PC-9 (cell line): ENCODE measurements at regions of chr5 and their contacts with region 1.

Region 1: GRCh38 chr5:69105996-69106906 is 12.4 kb downstream of the SLC30A5 start:
- DNase-seq: no peak
- H3K4me3 ChIP-seq: no peak overlapping the region
- H3K27ac ChIP-seq: no peak overlapping the region
- H3K4me1 ChIP-seq: no peaks in the 10 kb centered on the region
- H3K27me3 ChIP-seq: no peaks in the 10 kb centered on the region
- CTCF ChIP-seq: no peak

Region 2: GRCh38 chr5:68673106-68673822 is 433.0 kb before region 1 on chr5:
- CTCF ChIA-PET with region 1: no interaction called
- POLR2A ChIA-PET with region 1: no interaction called
- intact Hi-C with region 1: no loop called
- DNase-seq: no peak
- H3K4me3 ChIP-seq: no peak overlapping the region
- H3K27ac ChIP-seq: no peak overlapping the region
- H3K4me1 ChIP-seq: no peaks in the 10 kb centered on the region
- H3K27me3 ChIP-seq: no peaks in the 10 kb centered on the region
- CTCF ChIP-seq: no peak

Region 3: DNA sequence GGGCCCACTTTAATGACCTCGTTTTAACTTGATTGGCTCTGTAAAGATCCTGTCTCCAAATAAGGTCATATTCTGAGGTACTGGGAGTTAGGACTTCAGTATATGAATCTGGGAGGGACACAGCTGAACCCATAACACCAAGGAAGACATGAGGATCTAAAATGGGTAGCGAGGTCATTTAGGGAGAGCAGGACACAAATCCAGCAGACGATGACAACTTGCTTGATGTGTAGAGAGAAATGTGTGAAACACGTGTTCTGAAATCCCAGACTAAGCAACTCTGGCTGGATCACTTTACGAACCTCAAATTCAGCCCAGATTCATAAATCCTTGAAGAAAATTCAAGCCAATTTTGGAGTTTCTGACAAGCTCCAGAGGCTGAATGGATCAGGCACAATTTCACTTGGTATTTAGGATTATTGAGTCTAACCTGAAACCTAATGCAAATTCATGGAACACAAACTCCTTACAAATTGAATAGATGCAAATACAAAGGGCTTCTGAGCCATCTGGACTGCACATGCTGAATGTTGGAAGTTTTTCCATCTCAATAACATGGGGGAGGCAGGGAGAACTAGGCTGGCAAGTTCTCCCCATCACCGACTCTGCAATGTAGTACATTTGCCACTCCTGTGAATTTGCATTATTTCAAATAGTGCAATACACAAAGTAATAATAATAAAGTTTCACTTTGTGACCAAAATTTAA is 86.4 kb before region 1 on chr5:
- CTCF ChIA-PET with region 1: no interaction called
- POLR2A ChIA-PET with region 1: no interaction called
- intact Hi-C with region 1: no loop called
- DNase-seq: no peak
- H3K4me3 ChIP-seq: no peak overlapping the region
- H3K27ac ChIP-seq: no peak overlapping the region
- H3K4me1 ChIP-seq: no peaks in the 10 kb centered on the region
- H3K27me3 ChIP-seq: peaks cover 7% of the 10 kb centered on the region; the same call in 1 of the 2 replicates
- CTCF ChIP-seq: no peak

Region 4: DNA sequence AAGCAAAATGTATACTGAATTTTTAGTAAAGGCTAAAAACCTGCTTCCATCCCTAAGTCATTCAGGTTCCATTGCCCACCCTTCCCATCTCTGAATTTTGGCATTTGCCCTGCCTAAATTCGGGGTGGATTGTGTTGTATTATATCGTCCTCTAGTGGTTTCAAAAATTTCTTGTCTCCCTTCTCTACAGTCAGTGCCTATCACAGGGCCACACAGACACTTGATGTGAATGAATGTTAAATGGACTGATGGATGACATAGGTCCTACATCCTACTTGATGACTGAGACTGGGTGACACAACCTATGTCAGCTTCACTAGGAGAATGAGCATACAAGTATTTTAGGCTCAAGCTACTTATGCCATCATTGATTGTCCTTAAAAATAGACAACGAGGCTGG is 58.0 kb before region 1 on chr5:
- CTCF ChIA-PET with region 1: no interaction called
- POLR2A ChIA-PET with region 1: no interaction called
- intact Hi-C with region 1: no loop called
- DNase-seq: no peak
- H3K4me3 ChIP-seq: no peak overlapping the region
- H3K27ac ChIP-seq: no peak overlapping the region
- H3K4me1 ChIP-seq: peaks cover 32% of the 10 kb centered on the region
- H3K27me3 ChIP-seq: no peaks in the 10 kb centered on the region
- CTCF ChIP-seq: peak; percentile 35; the same call in 1 of the 2 replicates

Region 5: DNA sequence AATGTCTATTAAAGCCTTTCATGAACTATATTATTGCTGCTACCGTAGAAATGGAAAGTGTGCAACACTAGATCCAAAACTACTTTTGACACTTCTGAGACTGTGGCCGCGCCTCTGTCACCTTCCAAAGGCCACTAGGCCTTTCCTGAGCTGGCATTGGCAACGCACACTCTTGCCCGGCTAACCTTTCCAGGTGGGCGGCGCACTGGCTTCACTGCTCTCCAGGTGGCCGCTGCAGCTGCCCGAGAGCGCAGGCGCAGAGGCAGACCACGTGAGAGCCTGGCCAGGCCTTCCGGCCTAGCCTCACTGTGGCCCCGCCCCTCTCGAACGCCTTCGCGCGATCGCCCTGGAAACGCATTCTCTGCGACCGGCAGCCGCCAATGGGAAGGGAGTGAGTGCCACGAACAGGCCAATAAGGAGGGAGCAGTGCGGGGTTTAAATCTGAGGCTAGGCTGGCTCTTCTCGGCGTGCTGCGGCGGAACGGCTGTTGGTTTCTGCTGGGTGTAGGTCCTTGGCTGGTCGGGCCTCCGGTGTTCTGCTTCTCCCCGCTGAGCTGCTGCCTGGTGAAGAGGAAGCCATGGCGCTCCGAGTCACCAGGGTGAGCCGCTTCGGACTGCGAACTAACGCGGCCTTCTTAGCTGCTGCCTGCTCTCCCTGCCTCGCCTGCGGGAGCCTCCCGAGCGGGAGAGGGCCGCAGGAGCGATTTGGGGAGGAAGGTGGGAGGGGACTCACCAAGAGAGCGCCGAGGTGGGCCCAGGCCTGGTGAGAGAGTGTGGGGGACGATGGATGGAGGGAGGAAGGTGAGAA is 60.6 kb after region 1 on chr5 and contains the start of gene CCNB1:
- CTCF ChIA-PET with region 1: no interaction called
- POLR2A ChIA-PET with region 1: no interaction called
- intact Hi-C with region 1: no loop called
- DNase-seq: peak; percentile 94 to 98
- H3K4me3 ChIP-seq: peak within 1 kb of the TSS; percentile 92
- H3K27ac ChIP-seq: peak within 1 kb of the TSS; percentile 53
- H3K4me1 ChIP-seq: peaks cover 27% of the 10 kb centered on the region
- H3K27me3 ChIP-seq: no peaks in the 10 kb centered on the region
- CTCF ChIP-seq: no peak
- total RNA-seq, gene CCNB1: 174 and 248 TPM in 2 replicates

Region 6: GRCh38 chr5:69217548-69218526 is 111.6 kb after region 1 on chr5:
- CTCF ChIA-PET with region 1: no interaction called
- POLR2A ChIA-PET with region 1: interaction called, 11 read pairs
- intact Hi-C with region 1: no loop called
- DNase-seq: peak; percentile 78 to 92
- H3K4me3 ChIP-seq: peak overlapping the region; percentile 89
- H3K27ac ChIP-seq: peak overlapping the region; percentile 50
- H3K4me1 ChIP-seq: peaks cover 16% of the 10 kb centered on the region
- H3K27me3 ChIP-seq: no peaks in the 10 kb centered on the region
- CTCF ChIP-seq: no peak; the same call in 1 of the 2 replicates

Region 7: GRCh38 chr5:69265931-69266330 is 159.7 kb after region 1 on chr5:
- CTCF ChIA-PET with region 1: no interaction called
- POLR2A ChIA-PET with region 1: no interaction called
- intact Hi-C with region 1: loop called (anchors 5 kb)
- DNase-seq: no peak
- H3K4me3 ChIP-seq: no peak overlapping the region
- H3K27ac ChIP-seq: no peak overlapping the region
- H3K4me1 ChIP-seq: no peaks in the 10 kb centered on the region
- H3K27me3 ChIP-seq: no peaks in the 10 kb centered on the region
- CTCF ChIP-seq: peak; percentile 54; the same call in 1 of the 2 replicates